CD4-positive, alpha-beta T cell (primary cell): ENCODE measurements at regions of chr3 and their contacts with region 1.

Region 1: DNA sequence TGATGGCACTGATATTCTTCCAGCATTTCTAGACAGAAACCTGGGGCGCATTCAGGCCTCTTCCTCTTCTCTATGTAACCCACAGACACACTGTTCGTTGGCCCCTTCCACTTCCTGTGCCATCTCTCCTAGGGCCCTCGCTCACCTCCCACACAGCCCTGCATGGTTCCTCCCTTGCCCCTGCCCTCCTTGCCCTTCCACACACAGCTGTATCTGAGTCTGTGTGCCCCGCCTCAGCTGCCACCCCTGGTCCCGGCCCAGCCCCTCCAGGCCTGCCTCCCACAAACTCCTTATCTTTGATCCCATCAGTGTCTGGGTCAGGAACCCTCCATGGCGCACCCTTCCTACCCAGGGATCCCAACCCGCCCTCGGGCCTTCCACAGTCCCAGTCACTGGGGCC is 37.9 kb downstream of the RAB6B start:
- DNase-seq: no peak
- ATAC-seq: no peak
- H3K4me3 ChIP-seq: no peak overlapping the region
- H3K4me3 Mint-ChIP-seq: no peak overlapping the region
- H3K27ac ChIP-seq: no peak overlapping the region
- H3K27ac Mint-ChIP-seq: no peak overlapping the region
- H3K4me1 ChIP-seq: peaks cover 3% of the 10 kb centered on the region
- H3K4me1 Mint-ChIP-seq: no peaks in the 10 kb centered on the region
- H3K27me3 ChIP-seq: no peaks in the 10 kb centered on the region
- H3K27me3 Mint-ChIP-seq: no peaks in the 10 kb centered on the region
- CTCF ChIP-seq: no peak

Region 2: DNA sequence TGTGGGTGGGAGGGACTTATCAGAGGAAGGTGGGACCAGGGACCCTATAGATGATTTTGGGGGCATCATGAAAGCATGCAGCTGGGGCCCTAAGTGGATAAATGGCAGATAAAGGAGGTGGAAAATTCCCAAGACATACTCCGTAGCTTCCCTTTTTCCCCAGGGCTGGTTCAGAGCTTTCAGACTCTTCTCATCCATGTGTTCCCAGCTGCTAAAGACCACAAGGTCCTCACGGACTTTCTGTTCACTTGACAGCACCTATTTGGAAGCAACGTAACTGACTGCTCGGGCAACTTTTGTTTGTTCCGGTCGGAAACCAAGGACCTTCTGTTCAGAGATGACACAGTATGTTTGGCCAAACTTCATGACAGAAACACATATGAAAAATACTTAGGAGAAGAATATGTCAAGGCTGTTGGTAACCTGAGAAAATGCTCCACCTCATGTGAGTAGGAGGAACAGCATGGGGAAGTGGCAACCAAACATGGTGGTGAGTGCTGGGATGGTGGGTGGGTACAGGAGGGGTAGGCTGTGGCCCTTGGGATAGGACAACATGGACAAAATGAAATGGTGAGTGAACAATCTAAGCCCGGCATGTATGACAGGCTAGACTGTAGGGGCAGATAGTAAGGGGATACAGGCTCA is 80.9 kb before region 1 on chr3:
- CTCF ChIA-PET with region 1: no interaction called
- POLR2A ChIA-PET with region 1: no interaction called
- intact Hi-C with region 1: loop called in 1 of 2 experiments (anchors 5 kb)
- DNase-seq: no peak
- ATAC-seq: no peak
- H3K4me3 ChIP-seq: no peak overlapping the region
- H3K4me3 Mint-ChIP-seq: no peak overlapping the region
- H3K27ac ChIP-seq: no peak overlapping the region
- H3K27ac Mint-ChIP-seq: no peak overlapping the region
- H3K4me1 ChIP-seq: no peaks in the 10 kb centered on the region
- H3K4me1 Mint-ChIP-seq: no peaks in the 10 kb centered on the region
- H3K27me3 ChIP-seq: peaks cover 11 to 13% of the 10 kb centered on the region in 2 experiments
- H3K27me3 Mint-ChIP-seq: peaks cover 46% of the 10 kb centered on the region
- CTCF ChIP-seq: no peak

Region 3: GRCh38 chr3:134059671-134060560 is 202.1 kb after region 1 on chr3:
- CTCF ChIA-PET with region 1: no interaction called
- POLR2A ChIA-PET with region 1: no interaction called
- intact Hi-C with region 1: no loop called
- DNase-seq: no peak
- ATAC-seq: no peak
- H3K4me3 ChIP-seq: no peak overlapping the region
- H3K4me3 Mint-ChIP-seq: no peak overlapping the region
- H3K27ac ChIP-seq: no peak overlapping the region
- H3K27ac Mint-ChIP-seq: no peak overlapping the region
- H3K4me1 ChIP-seq: no peaks in the 10 kb centered on the region
- H3K4me1 Mint-ChIP-seq: no peaks in the 10 kb centered on the region
- H3K27me3 ChIP-seq: no peaks in the 10 kb centered on the region
- H3K27me3 Mint-ChIP-seq: no peaks in the 10 kb centered on the region
- CTCF ChIP-seq: no peak

Region 4: GRCh38 chr3:134274571-134274970 is 416.8 kb after region 1 on chr3:
- CTCF ChIA-PET with region 1: no interaction called
- POLR2A ChIA-PET with region 1: no interaction called
- intact Hi-C with region 1: no loop called
- DNase-seq: no peak
- ATAC-seq: no peak
- H3K4me3 ChIP-seq: no peak overlapping the region
- H3K4me3 Mint-ChIP-seq: no peak overlapping the region
- H3K27ac ChIP-seq: no peak overlapping the region
- H3K27ac Mint-ChIP-seq: no peak overlapping the region
- H3K4me1 ChIP-seq: no peaks in the 10 kb centered on the region
- H3K4me1 Mint-ChIP-seq: no peaks in the 10 kb centered on the region
- H3K27me3 ChIP-seq: peaks cover 4% of the 10 kb centered on the region in 2 experiments
- H3K27me3 Mint-ChIP-seq: peaks cover 43% of the 10 kb centered on the region
- CTCF ChIP-seq: no peak